Activated CD4-positive, alpha-beta memory T cell treated with anti-CD3 and anti-CD28 coated beads for 36 hours (primary cell): ENCODE measurements at regions of chr10 and their contacts with region 1.

Region 1: DNA sequence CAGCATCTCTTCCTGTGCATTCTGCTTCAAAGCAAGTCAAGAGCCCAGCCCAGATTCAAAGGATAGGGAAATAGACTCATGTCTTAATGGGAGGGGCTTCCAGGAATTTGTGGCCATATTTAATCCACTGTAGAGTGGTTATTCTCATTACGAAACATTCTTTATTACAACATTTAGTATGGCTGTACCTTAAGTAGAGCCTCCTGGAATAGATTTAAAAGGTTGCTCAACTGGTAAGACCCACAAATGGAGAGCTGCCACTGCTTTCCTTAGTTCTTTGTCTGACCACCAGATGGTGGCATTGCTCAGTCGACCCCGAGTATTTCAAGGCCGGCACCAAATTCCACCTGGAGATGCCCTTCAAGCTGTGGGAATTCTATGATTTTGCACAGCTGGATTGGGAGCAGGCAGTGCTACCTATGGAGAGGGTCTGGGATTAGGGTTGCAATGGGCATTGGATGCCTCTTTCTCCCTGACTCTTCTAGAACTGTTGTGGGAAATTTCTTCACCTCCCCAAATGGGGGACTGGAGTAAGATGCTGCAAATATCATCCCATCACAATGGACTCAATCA is 102.2 kb downstream of the RBM20 start:
- DNase-seq: peak; percentile 57
- H3K4me3 Mint-ChIP-seq: no peak overlapping the region
- H3K27ac Mint-ChIP-seq: no peak overlapping the region
- H3K4me1 Mint-ChIP-seq: peaks cover 54% of the 10 kb centered on the region
- H3K27me3 Mint-ChIP-seq: no peaks in the 10 kb centered on the region

Region 2: GRCh38 chr10:110556969-110557601 is 189.3 kb before region 1 on chr10:
- CTCF ChIA-PET with region 1: no interaction called
- POLR2A ChIA-PET with region 1: no interaction called
- intact Hi-C with region 1: no loop called
- DNase-seq: peak; percentile 80
- H3K4me3 Mint-ChIP-seq: no peak overlapping the region
- H3K27ac Mint-ChIP-seq: no peak overlapping the region
- H3K4me1 Mint-ChIP-seq: peaks cover 2% of the 10 kb centered on the region
- H3K27me3 Mint-ChIP-seq: peaks cover under 1% of the 10 kb centered on the region

Region 3: GRCh38 chr10:110610308-110610774 is 136.0 kb before region 1 on chr10:
- CTCF ChIA-PET with region 1: interaction called, 15 read pairs
- POLR2A ChIA-PET with region 1: no interaction called
- intact Hi-C with region 1: loop called (anchors 2 kb)
- DNase-seq: peak; percentile 66
- H3K4me3 Mint-ChIP-seq: no peak overlapping the region
- H3K27ac Mint-ChIP-seq: no peak overlapping the region
- H3K4me1 Mint-ChIP-seq: peaks cover 26% of the 10 kb centered on the region
- H3K27me3 Mint-ChIP-seq: no peaks in the 10 kb centered on the region

Region 4: GRCh38 chr10:110803830-110804338 is 57.5 kb after region 1 on chr10:
- CTCF ChIA-PET with region 1: interaction called, 5 read pairs
- POLR2A ChIA-PET with region 1: no interaction called
- intact Hi-C with region 1: loop called (anchors 2 kb)
- DNase-seq: peak; percentile 49
- H3K4me3 Mint-ChIP-seq: no peak overlapping the region
- H3K27ac Mint-ChIP-seq: peak overlapping the region; percentile 15
- H3K4me1 Mint-ChIP-seq: peaks cover 36% of the 10 kb centered on the region
- H3K27me3 Mint-ChIP-seq: no peaks in the 10 kb centered on the region

Region 5: GRCh38 chr10:110918643-110919363 is 172.5 kb after region 1 on chr10 and contains the start of gene BBIP1:
- CTCF ChIA-PET with region 1: interaction called, 4 read pairs
- POLR2A ChIA-PET with region 1: interaction called, 4 read pairs
- intact Hi-C with region 1: loop called (anchors 1 kb)
- DNase-seq: no peak
- H3K4me3 Mint-ChIP-seq: peak within 1 kb of the TSS; percentile 92
- H3K27ac Mint-ChIP-seq: peak within 1 kb of the TSS; percentile 99
- H3K4me1 Mint-ChIP-seq: peaks cover 39% of the 10 kb centered on the region
- H3K27me3 Mint-ChIP-seq: no peaks in the 10 kb centered on the region
- total RNA-seq, gene BBIP1: 36.4 to 43.9 TPM

Region 6: GRCh38 chr10:111076191-111076681 is 329.9 kb after region 1 on chr10:
- CTCF ChIA-PET with region 1: interaction called, 3 read pairs
- POLR2A ChIA-PET with region 1: no interaction called
- intact Hi-C with region 1: loop called (anchors 5 kb)
- DNase-seq: peak; percentile 70
- H3K4me3 Mint-ChIP-seq: peak overlapping the region; percentile 65
- H3K27ac Mint-ChIP-seq: no peak overlapping the region
- H3K4me1 Mint-ChIP-seq: peaks cover 11% of the 10 kb centered on the region
- H3K27me3 Mint-ChIP-seq: peaks cover 56% of the 10 kb centered on the region

Region 7: GRCh38 chr10:111598436-111599059 is 852.2 kb after region 1 on chr10:
- CTCF ChIA-PET with region 1: interaction called, 3 read pairs
- POLR2A ChIA-PET with region 1: no interaction called
- intact Hi-C with region 1: loop called (anchors 2 kb)
- DNase-seq: peak; percentile 54
- H3K4me3 Mint-ChIP-seq: no peak overlapping the region
- H3K27ac Mint-ChIP-seq: no peak overlapping the region
- H3K4me1 Mint-ChIP-seq: no peaks in the 10 kb centered on the region
- H3K27me3 Mint-ChIP-seq: peaks cover under 1% of the 10 kb centered on the region